HEK293 (cell line): ENCODE measurements at regions of chr19 and their contacts with region 1.

Region 1: GRCh38 chr19:39970675-39971379 is at the start of gene PSMC4:
- H3K4me3 ChIP-seq: peak within 1 kb of the TSS; percentile 66
- H3K27ac ChIP-seq: peak within 1 kb of the TSS; percentile 80
- H3K4me1 ChIP-seq: peaks cover 14% of the 10 kb centered on the region
- CTCF ChIP-seq: peak; percentile 100

Region 2: GRCh38 chr19:39833464-39834286 is 137.2 kb before region 1 on chr19 and contains the start of gene DYRK1B:
- CTCF ChIA-PET with region 1: interaction called, 6 read pairs
- POLR2A ChIA-PET with region 1: interaction called, 23 read pairs
- H3K4me3 ChIP-seq: peak within 1 kb of the TSS; percentile 64
- H3K27ac ChIP-seq: peak within 1 kb of the TSS; percentile 95
- H3K4me1 ChIP-seq: peaks cover 18% of the 10 kb centered on the region
- CTCF ChIP-seq: peak; percentile 5; the same call in 1 of the 2 replicates

Region 3: GRCh38 chr19:39929750-39930149 is 41.1 kb before region 1 on chr19:
- CTCF ChIA-PET with region 1: interaction called, 10 read pairs
- POLR2A ChIA-PET with region 1: interaction called, 4 read pairs
- H3K4me3 ChIP-seq: no peak overlapping the region
- H3K27ac ChIP-seq: no peak overlapping the region
- H3K4me1 ChIP-seq: no peaks in the 10 kb centered on the region; the same call in 1 of the 2 replicates
- CTCF ChIP-seq: no peak

Region 4: DNA sequence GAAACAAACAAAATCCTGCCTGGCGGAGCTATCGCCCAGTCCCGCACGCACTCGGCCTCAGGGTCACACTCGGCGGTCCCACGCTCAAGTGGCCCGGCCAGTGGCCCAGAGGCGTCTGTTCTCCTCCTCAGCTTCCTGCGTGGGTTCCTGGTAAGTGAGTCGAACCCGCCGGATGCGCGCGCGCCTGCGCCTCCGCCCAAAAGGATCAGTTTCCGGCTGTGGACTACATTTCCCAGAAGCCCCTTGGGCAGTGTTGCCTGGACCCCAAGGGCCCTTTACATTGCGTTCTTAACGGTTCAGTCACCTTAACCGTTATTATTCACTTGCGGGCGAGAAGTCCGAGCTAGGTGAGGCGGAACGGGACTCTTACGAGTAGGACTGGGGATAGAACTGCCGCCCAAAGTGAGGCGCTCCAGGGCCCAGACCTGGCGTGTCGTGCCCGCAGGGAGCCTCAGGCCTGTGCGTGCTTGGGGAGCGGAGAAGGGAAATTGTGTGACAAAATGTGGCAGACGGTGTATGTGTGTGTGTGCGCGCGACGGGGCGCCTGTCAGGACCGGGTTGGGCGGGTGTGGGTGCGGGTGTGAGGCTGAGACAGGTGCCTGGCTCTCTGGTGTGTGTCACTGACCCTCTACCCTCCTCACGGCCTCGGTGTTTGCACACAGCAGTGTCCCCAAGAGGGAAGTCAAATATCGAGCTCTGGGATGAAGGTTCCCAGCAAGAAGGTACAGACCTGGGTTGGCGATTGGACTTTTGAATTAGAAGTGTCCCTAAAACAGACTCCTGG is 26.2 kb after region 1 on chr19 and contains the start of gene ZNF546:
- CTCF ChIA-PET with region 1: interaction called, 17 read pairs
- POLR2A ChIA-PET with region 1: interaction called, 49 read pairs
- H3K4me3 ChIP-seq: peak within 1 kb of the TSS; percentile 84
- H3K27ac ChIP-seq: peak within 1 kb of the TSS; percentile 83
- H3K4me1 ChIP-seq: peaks cover 9% of the 10 kb centered on the region
- CTCF ChIP-seq: peak; percentile 69

Region 5: GRCh38 chr19:40165362-40165937 is 194.6 kb after region 1 on chr19:
- CTCF ChIA-PET with region 1: interaction called, 11 read pairs
- POLR2A ChIA-PET with region 1: interaction called, 3 read pairs
- H3K4me3 ChIP-seq: no peak overlapping the region
- H3K27ac ChIP-seq: no peak overlapping the region
- H3K4me1 ChIP-seq: 0 out of 2 replicates have a peak, but pooled peaks cover 2% of the 10 kb centered on the region
- CTCF ChIP-seq: peak; percentile 80